GM10248 (cell line): ENCODE measurements at regions of chr1 and their contacts with region 1.

Region 1: GRCh38 chr1:165063181-165063965 is 293.1 kb downstream of the LMX1A start:
- DNase-seq: no peak
- CTCF ChIP-seq: no peak

Region 2: DNA sequence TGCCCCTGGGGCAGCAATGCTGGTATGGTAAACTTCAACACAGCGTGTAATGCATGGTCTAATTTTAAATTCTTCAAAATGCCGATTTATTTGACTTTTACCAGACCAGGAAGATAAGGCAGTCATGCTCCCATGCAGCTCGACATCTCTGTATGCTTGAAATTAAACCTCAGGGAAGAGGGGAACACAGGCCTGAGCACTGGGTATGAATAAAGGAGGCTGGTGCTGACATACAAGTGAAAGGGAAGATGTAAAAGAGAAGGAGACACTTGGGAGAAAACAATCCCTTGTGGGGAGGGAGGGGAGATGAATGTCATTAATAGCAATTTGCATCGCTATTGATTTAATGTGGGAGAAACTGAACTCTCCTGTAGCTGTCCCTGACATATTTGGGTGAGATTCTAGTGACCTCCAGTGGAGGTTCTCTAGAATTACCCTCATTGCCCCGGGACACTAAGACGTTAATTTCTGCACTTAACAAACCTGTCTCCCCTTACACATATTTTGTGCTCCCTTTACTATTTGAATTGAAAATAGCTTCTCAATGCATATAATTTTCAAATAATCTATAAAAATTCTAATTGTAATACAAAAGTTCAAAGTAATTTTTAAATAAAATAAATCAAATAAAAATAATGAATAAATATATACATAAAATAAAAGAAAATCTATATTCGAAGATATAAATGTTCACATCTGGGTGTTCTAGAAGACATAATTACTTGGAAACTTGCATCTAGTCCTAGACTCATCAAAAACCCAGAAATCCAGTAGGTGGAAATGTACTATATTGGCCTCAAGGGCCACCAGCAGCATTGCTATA is 10.0 kb after region 1 on chr1:
- CTCF ChIA-PET with region 1: interaction called, 17 read pairs
- POLR2A ChIA-PET with region 1: no interaction called
- DNase-seq: peak; percentile 28
- CTCF ChIP-seq: peak; percentile 60